BJ (cell line): ENCODE measurements at regions of chr13 and their contacts with region 1.

Region 1: GRCh38 chr13:97344265-97345175 is 89.4 kb upstream of the RAP2A start:
- DNase-seq: no peak
- H3K4me3 ChIP-seq: no peak overlapping the region
- H3K27me3 ChIP-seq: no peaks in the 10 kb centered on the region
- CTCF ChIP-seq: peak; percentile 74

Region 2: GRCh38 chr13:96744367-96745331 is 599.9 kb before region 1 on chr13:
- CTCF ChIA-PET with region 1: no interaction called
- POLR2A ChIA-PET with region 1: no interaction called
- DNase-seq: no peak
- H3K4me3 ChIP-seq: no peak overlapping the region
- H3K27me3 ChIP-seq: no peaks in the 10 kb centered on the region
- CTCF ChIP-seq: no peak

Region 3: DNA sequence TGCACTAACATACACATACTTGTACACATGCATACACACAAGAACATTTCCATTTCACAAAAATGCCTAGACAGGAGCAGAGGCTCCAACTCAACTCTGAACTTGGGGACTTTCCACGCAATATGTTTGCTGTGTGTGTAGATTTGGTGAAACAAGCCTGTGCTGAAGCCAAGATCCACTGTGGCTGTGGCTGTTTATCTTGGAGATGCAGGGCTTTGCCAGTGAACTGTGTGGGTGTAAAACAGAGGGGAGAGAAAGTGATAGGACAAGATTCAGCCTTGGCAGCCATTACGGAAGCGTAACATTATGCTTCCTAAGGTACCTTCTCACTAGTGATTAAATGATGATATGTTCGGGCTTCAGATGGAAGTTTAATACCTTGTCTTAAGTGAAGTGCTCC is 195.6 kb before region 1 on chr13:
- CTCF ChIA-PET with region 1: no interaction called
- POLR2A ChIA-PET with region 1: no interaction called
- DNase-seq: no peak
- H3K4me3 ChIP-seq: no peak overlapping the region
- H3K27me3 ChIP-seq: peaks cover 10% of the 10 kb centered on the region
- CTCF ChIP-seq: no peak

Region 4: DNA sequence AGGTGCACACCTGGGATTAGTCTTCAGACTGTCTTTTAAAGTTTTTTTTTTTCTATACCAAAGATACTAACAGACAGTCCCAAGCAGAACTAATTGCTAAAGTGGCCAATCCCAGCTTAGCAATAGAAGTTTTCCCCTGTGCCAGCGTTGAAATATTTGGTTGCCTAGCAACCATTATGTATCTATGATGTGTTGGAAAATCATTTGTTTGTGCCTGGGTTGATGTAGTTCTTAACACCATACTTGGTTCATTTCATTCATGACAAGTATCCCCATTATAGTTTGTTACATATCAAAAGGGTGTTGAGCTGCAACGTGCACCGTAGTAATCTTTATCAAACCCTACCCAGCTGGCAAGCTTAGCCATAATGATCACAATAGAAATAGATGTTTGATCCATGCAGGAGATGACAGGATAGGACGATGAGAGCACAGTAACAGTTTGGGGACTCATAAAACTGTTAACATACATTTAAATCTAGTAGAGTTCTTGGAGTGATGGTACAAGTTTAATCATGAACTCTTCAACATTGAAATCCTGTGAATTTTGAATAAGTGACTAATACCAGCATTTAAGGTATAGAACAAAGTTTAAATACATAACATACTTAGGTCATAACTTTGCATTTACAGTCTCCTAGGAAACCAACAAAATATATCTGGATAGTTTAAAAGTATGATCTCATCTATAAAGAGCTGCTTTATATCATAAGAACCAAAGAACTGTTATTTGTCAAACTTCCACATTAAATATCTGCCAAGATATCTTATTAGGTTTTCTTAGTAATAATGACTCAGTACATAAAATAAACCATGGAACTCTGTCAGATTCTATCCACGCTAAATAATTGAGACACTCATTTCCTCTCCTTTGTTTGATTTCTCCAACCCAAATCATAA is 49.0 kb before region 1 on chr13:
- CTCF ChIA-PET with region 1: no interaction called
- POLR2A ChIA-PET with region 1: no interaction called
- DNase-seq: no peak
- H3K4me3 ChIP-seq: no peak overlapping the region
- H3K27me3 ChIP-seq: no peaks in the 10 kb centered on the region
- CTCF ChIP-seq: no peak

Region 5: DNA sequence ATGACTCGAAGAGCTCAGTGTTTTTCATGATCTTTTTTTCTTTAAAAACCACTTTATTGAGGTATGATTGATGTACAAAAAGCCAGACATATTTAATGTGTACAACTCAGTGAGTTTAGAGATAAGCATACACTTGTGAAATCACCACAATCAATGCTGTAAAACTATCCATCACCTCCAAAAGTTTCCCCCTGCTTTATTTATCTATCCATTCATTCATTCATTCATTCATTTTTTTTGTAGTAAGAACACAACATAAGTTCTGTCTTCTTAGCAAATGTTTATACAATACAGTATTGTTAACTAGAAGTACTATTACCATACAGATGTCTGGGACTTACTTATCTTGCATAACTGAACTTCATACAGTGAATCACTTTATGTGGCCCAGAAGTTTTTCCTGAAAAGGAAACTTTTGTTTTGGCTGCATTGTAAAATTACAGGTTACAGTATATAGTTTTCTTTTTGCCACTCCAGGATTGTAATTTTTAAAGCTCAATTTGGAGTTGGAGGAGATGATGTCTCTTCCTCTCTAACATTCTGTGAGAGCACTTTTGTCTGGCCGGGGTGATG is 96.2 kb after region 1 on chr13:
- CTCF ChIA-PET with region 1: no interaction called
- POLR2A ChIA-PET with region 1: interaction called, 17 read pairs
- DNase-seq: no peak
- H3K4me3 ChIP-seq: no peak overlapping the region
- H3K27me3 ChIP-seq: no peaks in the 10 kb centered on the region
- CTCF ChIP-seq: no peak

Region 6: GRCh38 chr13:97506511-97506910 is 162.0 kb after region 1 on chr13:
- CTCF ChIA-PET with region 1: no interaction called
- POLR2A ChIA-PET with region 1: no interaction called
- DNase-seq: no peak
- H3K4me3 ChIP-seq: no peak overlapping the region
- H3K27me3 ChIP-seq: no peaks in the 10 kb centered on the region; the same call in 1 of the 2 replicates
- CTCF ChIP-seq: no peak